AG04450 (cell line): ENCODE measurements at regions of chr6 and their contacts with region 1.

Region 1: GRCh38 chr6:89371849-89372505 is 19.5 kb upstream of the UBE2J1 start:
- DNase-seq: peak; percentile 6
- H3K4me3 ChIP-seq: no peak overlapping the region
- H3K27ac ChIP-seq: no peak overlapping the region
- H3K27me3 ChIP-seq: peaks cover 10% of the 10 kb centered on the region
- CTCF ChIP-seq: peak; percentile 93

Region 2: DNA sequence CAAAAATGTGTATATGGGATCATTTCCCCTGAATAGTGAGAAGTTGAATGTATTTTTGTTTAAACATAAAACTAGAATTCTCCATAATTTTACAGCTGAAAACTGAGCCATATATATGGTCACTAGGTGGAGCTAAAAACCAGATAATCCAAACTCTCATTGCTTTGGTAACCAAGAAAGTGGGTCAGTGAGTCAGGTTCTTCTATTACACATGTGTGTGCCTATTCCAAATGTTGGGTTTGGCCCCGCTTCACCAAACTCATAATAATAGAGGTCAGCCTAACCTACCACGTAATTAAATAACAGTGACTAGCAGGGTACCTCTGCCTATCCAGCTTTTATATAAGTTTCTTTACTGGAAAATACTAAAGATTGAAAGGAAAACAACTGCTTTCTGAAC is 389.3 kb before region 1 on chr6:
- CTCF ChIA-PET with region 1: interaction called, 14 read pairs
- POLR2A ChIA-PET with region 1: no interaction called
- DNase-seq: peak; percentile 43
- H3K4me3 ChIP-seq: no peak overlapping the region
- H3K27ac ChIP-seq: no peak overlapping the region
- H3K27me3 ChIP-seq: peaks cover 3% of the 10 kb centered on the region
- CTCF ChIP-seq: peak; percentile 70

Region 3: GRCh38 chr6:89328976-89329375 is 43.0 kb before region 1 on chr6:
- CTCF ChIA-PET with region 1: interaction called, 13 read pairs
- POLR2A ChIA-PET with region 1: no interaction called
- DNase-seq: no peak
- H3K4me3 ChIP-seq: no peak overlapping the region
- H3K27ac ChIP-seq: no peak overlapping the region
- H3K27me3 ChIP-seq: no peaks in the 10 kb centered on the region
- CTCF ChIP-seq: no peak

Region 4: GRCh38 chr6:89360415-89360999 is 11.5 kb before region 1 on chr6:
- CTCF ChIA-PET with region 1: interaction called, 43 read pairs
- POLR2A ChIA-PET with region 1: interaction called, 4 read pairs
- DNase-seq: no peak
- H3K4me3 ChIP-seq: no peak overlapping the region
- H3K27ac ChIP-seq: no peak overlapping the region
- H3K27me3 ChIP-seq: peaks cover 4% of the 10 kb centered on the region
- CTCF ChIP-seq: no peak

Region 5: GRCh38 chr6:89412071-89413005 is 40.4 kb after region 1 on chr6 and contains the start of gene RRAGD:
- CTCF ChIA-PET with region 1: interaction called, 16 read pairs
- POLR2A ChIA-PET with region 1: no interaction called
- DNase-seq: no peak
- H3K4me3 ChIP-seq: peak within 1 kb of the TSS; percentile 35; the same call in 1 of the 2 replicates
- H3K27ac ChIP-seq: no peak within 1 kb of the TSS
- H3K27me3 ChIP-seq: peaks cover 55% of the 10 kb centered on the region
- CTCF ChIP-seq: no peak
- polyA plus RNA-seq, gene RRAGD: not detected in 2 replicates